GM12878 (cell line): ENCODE measurements at regions of chr4 and their contacts with region 1.

Region 1: GRCh38 chr4:112060212-112060611 is 85.0 kb upstream of the FAM241A start:
- DNase-seq: no peak
- ATAC-seq: peak; percentile 77
- H3K4me3 ChIP-seq: no peak overlapping the region
- H3K27ac ChIP-seq: no peak overlapping the region
- H3K4me1 ChIP-seq: no peaks in the 10 kb centered on the region
- H3K27me3 ChIP-seq: no peaks in the 10 kb centered on the region
- CTCF ChIP-seq: peak; percentile 49 to 67 (median 54); a peak in 5 of 6 replicates
- EP300 ChIP-seq: no peak
- POLR2A ChIP-seq: no peak
- RAD21 ChIP-seq: peak; percentile 66

Region 2: GRCh38 chr4:111641955-111642579 is 418.1 kb before region 1 on chr4:
- CTCF ChIA-PET with region 1: interaction called, 10 read pairs
- POLR2A ChIA-PET with region 1: no interaction called
- RAD21 ChIA-PET with region 1: interaction called, 4 read pairs
- SMC1A ChIA-PET with region 1: no interaction called
- in situ Hi-C with region 1: no loop called
- intact Hi-C with region 1: no loop called
- DNase-seq: peak; percentile 13
- ATAC-seq: peak; percentile 98
- H3K4me3 ChIP-seq: no peak overlapping the region
- H3K27ac ChIP-seq: no peak overlapping the region
- H3K4me1 ChIP-seq: no peaks in the 10 kb centered on the region
- H3K27me3 ChIP-seq: no peaks in the 10 kb centered on the region; a peak in 1 of 4 replicates
- CTCF ChIP-seq: peak; percentile 80 to 97 (median 83)
- EP300 ChIP-seq: no peak
- POLR2A ChIP-seq: no peak
- RAD21 ChIP-seq: peak; percentile 74